IMR-90 (cell line): ENCODE measurements at regions of chr1 and their contacts with region 1.

Region 1: DNA sequence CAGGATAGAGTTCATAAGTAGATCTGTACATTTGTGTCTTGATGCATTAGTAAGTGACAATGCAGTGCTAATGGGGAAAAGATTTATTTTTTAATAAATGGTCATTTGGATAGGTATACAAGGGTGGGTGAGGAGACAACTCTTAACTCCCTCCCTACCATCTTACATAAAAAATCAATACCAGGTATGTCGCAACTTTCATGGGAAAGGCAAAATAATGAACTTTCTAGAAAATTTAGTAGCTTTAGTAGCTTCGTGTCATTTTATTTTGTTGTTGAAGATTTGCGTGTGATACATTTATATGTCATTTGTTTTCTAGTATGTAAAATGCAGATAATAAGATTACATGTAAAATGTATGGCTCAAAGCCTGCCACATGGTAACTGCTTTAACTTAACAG is 310.8 kb downstream of the RYR2 start:
- DNase-seq: no peak
- ATAC-seq: no peak
- H3K4me3 ChIP-seq: no peak overlapping the region
- H3K27ac ChIP-seq: no peak overlapping the region
- H3K4me1 ChIP-seq: no peaks in the 10 kb centered on the region
- H3K27me3 ChIP-seq: no peaks in the 10 kb centered on the region
- CTCF ChIP-seq: no peak
- POLR2A ChIP-seq: no peak
- RAD21 ChIP-seq: no peak

Region 2: GRCh38 chr1:237309595-237310118 is 43.1 kb before region 1 on chr1:
- CTCF ChIA-PET with region 1: no interaction called
- POLR2A ChIA-PET with region 1: no interaction called
- dilution Hi-C with region 1: no loop called
- in situ Hi-C with region 1: no loop called
- intact Hi-C with region 1: loop called (anchors 1 kb)
- DNase-seq: no peak
- ATAC-seq: no peak
- H3K4me3 ChIP-seq: no peak overlapping the region
- H3K27ac ChIP-seq: no peak overlapping the region
- H3K4me1 ChIP-seq: no peaks in the 10 kb centered on the region
- H3K27me3 ChIP-seq: no peaks in the 10 kb centered on the region
- CTCF ChIP-seq: no peak
- POLR2A ChIP-seq: no peak
- RAD21 ChIP-seq: no peak

Region 3: GRCh38 chr1:237717106-237717505 is 364.4 kb after region 1 on chr1:
- CTCF ChIA-PET with region 1: no interaction called
- POLR2A ChIA-PET with region 1: no interaction called
- dilution Hi-C with region 1: no loop called
- in situ Hi-C with region 1: no loop called
- intact Hi-C with region 1: no loop called
- DNase-seq: no peak
- ATAC-seq: no peak
- H3K4me3 ChIP-seq: no peak overlapping the region
- H3K27ac ChIP-seq: no peak overlapping the region
- H3K4me1 ChIP-seq: no peaks in the 10 kb centered on the region
- H3K27me3 ChIP-seq: no peaks in the 10 kb centered on the region
- CTCF ChIP-seq: no peak
- POLR2A ChIP-seq: no peak
- RAD21 ChIP-seq: no peak